Cardiac septum (tissue), 1 donor: ENCODE measurements at regions of chr20 and their contacts with region 1.

Region 1: GRCh38 chr20:49610701-49611538 is 43.0 kb upstream of the PTGIS start:
- DNase-seq: peak; percentile 92

Region 2: GRCh38 chr20:49330544-49331239 is 280.2 kb before region 1 on chr20:
- intact Hi-C with region 1: loop called (anchors 5 kb)
- DNase-seq: no peak

Region 3: DNA sequence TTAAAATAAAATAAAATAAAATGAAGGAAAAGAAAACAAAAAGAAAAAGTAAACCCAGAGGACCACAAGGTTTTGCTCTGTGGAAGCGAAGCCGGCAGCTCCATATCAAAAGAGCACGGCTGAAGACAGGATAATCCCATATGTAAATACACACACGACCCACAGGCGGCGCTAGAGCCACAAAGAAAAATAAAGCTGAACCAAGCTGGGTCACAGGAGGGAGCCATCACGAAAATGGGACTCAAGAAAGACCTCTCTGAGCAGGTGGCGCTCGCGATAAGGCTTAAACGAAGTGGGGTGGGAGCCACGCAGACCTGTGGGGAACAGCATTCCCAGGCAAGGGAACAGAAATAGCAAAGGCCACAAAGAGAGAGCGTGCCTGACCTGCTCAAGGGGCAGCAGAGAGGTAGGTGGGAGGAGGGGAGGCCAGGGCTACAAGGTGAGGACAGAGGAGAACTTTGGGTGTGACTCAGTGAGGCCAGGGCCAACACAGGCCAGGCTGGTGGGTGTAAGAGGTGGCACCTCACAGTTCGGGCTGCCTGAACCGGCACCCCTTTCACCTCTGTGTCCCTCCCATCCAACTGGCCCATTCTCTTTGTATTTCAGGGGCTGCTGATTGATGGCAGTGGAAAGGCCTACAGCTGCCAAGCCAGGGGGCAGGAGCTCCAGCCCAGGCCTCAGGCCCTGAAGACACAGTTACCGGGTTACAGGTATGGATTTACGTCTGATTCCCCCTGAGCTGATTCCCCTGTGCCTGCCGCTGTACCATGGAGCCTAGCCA is 69.0 kb before region 1 on chr20:
- intact Hi-C with region 1: loop called (anchors 2 kb)
- DNase-seq: peak; percentile 84

Region 4: GRCh38 chr20:49713753-49714712 is 103.1 kb after region 1 on chr20 and contains the start of gene B4GALT5:
- intact Hi-C with region 1: no loop called
- DNase-seq: peak; percentile 87
- total RNA-seq, gene B4GALT5: 28.0 TPM

Region 5: GRCh38 chr20:49821870-49822331 is 211.0 kb after region 1 on chr20:
- intact Hi-C with region 1: loop called (anchors 5 kb)
- DNase-seq: no peak

Region 6: GRCh38 chr20:49846206-49846807 is 235.4 kb after region 1 on chr20:
- intact Hi-C with region 1: loop called (anchors 2 kb)
- DNase-seq: no peak

Region 7: DNA sequence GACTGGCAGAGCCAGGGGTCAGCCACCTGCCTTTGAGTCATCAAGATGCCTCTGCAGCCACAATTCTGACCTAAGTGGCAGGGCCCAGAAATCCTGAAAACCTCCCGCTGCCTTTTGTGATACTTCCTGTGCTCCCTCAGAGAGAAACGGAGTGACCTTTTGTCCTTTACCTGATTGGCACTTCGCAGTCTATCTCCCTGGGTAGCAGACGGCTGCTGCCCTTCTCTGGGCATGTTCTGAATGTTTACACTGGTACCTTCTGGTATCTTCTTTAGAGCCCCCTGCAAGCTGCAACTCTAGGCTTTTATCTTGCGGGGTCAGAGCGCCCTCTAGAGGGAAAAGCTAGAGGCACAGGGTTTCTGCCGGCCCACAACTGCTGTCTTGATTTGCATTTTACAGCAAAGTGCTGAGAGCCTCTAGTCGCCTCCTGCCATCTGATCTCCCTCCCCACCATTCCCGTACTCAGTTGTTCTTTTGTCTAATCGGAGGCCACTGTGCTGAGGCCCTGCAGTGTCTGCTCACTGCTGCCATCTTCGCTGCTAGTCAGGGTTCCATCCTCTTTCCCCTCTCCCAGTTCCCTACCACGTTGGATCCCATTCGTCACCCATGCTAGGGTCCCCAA is 277.5 kb after region 1 on chr20:
- intact Hi-C with region 1: loop called (anchors 5 kb)
- DNase-seq: no peak

Region 8: DNA sequence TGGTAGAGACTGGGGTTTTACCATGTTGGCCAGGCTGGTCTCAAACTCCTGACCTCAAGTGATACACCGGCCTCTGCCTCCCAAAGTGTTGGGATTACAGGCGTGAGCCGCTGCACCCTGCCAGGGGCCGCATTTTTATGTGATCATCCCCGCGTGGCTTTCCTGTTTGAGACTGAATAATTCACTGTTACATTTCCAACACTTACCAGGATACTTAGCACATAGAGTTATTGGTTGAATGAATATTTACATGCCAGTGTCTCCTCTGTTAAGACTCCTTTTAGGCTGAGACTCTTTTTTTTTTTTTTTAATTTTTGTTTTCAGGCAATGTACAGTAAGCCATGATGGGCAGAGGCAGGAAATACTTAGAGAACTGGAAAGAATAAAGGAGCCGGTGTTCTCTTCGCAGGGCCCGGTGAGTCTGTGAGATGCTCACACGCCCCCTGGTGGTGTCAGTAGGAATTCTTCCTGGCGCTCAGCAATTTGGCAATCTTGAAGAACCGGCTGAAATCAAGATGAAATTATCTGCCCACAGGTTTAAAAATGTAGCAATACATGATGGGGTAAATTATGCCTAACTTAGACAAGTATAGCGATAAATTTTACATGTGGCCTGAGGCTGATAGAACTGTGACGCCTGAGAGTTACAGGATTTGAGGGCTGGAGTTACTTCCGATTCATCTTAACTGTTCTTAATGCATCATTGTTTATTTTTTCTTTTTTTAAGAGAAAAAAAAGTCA is 317.7 kb after region 1 on chr20:
- intact Hi-C with region 1: loop called (anchors 5 kb)
- DNase-seq: peak; percentile 88